ENCODE measurements at regions of chr10 and their contacts with region 1.

Region 1: DNA sequence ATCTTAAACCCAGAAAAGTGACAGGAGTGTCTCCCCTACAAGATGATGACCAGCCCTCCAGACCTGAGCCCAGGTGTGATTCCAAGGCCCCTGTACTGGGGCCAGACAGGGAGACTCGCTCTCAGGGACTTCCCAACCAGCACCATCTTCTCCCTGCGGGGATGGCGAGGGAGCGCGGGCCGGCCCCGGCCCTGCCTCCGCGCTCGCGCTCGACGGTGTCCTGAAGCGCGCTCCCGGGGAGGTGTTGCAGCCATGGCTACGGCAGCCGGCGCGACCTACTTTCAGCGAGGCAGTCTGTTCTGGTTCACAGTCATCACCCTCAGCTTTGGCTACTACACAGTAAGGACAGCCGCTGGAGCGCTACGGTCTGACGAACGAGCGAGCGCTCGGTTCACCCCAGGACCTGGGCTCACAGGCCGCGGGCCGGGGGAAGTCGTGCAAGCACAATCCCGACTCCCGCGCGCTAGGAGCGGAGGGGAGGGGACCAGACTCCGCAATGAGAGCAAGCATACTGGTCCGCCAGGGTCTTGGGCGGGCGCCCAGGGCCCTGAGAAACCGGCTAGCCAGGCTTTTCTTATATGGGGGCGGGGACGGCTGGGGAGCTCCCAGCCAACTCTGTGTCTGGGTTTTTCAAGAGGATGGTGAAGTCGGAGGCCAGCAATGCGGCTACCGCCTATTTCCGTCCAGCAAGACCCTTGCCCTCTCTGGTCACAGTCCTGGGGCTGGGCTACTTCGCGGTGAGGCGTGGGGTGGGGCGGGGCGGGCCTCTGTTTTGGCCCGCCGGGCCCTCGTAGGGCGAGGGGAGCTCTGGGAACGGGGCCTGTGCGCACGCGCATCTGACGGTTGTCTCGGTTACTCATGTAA is at the start of gene TMEM254:
- DNase-seq: peak; percentile 95
- ATAC-seq: peak; percentile 74
- H3K4me3 Mint-ChIP-seq: peak within 1 kb of the TSS; percentile 93
- H3K27ac Mint-ChIP-seq: peak within 1 kb of the TSS; percentile 96
- H3K4me1 Mint-ChIP-seq: peaks cover 32% of the 10 kb centered on the region
- H3K27me3 Mint-ChIP-seq: no peaks in the 10 kb centered on the region
- total RNA-seq, gene TMEM254: 11.3 to 15.2 TPM

Region 2: DNA sequence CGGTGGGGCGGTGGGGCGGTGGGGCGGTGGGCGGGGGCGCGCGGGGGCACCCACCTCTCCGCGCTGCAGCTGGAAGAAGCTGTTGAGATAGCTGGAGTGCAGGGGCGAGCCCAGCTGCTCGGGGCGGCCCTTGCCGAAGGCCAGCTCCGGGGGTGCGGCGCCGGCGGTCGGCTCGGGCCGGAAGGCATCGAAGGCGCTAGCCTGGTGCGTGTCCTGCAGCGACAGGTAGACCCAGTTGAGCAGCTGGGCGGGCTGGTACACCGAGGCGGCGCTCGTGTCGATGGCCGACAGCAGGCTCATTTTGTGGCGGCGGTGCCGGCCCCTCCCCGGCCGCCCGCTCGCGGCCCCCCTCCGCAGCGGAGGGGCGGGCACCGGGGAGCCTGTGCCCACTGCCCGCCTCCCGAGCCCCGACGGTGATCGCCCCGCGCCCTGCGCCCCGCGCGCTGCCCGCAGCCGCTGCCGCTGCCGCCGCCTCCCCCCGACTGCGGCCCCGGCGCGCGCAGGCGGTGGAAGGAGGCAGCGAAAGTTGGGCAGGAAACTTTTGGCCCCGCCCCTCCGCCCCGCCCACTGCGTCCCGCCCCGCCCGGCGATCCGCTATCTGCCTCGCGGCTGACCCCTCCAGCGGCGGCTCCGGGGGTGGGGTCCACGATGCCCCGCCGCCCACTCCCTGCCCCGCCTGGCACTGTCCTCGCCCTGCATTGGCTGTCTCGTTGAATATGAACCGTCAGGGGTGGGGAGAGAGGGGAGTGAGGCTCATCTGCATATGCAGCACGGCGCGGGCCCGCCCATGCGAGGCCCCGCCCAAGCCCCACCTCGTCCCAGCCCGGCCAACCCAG is 633.3 kb before region 1 on chr10 and contains the start of gene ZCCHC24:
- CTCF ChIA-PET with region 1: no interaction called
- POLR2A ChIA-PET with region 1: no interaction called
- intact Hi-C with region 1: loop called in 1 of 2 experiments (anchors 1 kb)
- DNase-seq: peak; percentile 93
- ATAC-seq: peak; percentile 97
- H3K4me3 Mint-ChIP-seq: peak within 1 kb of the TSS; percentile 65
- H3K27ac Mint-ChIP-seq: no peak within 1 kb of the TSS
- H3K4me1 Mint-ChIP-seq: peaks cover 16% of the 10 kb centered on the region
- H3K27me3 Mint-ChIP-seq: peaks cover 7% of the 10 kb centered on the region
- total RNA-seq, gene ZCCHC24: 0.53 to 0.75 TPM

Region 3: GRCh38 chr10:80187465-80188409 is 109.1 kb after region 1 on chr10:
- CTCF ChIA-PET with region 1: interaction called, 3 read pairs
- POLR2A ChIA-PET with region 1: no interaction called
- intact Hi-C with region 1: loop called in 1 of 2 experiments (anchors 5 kb)
- DNase-seq: peak; percentile 88
- ATAC-seq: peak; percentile 80
- H3K4me3 Mint-ChIP-seq: peak overlapping the region; percentile 60
- H3K27ac Mint-ChIP-seq: peak overlapping the region; percentile 91
- H3K4me1 Mint-ChIP-seq: peaks cover 85% of the 10 kb centered on the region
- H3K27me3 Mint-ChIP-seq: no peaks in the 10 kb centered on the region

Region 4: GRCh38 chr10:80530251-80530650 is 451.6 kb after region 1 on chr10:
- CTCF ChIA-PET with region 1: no interaction called
- POLR2A ChIA-PET with region 1: no interaction called
- intact Hi-C with region 1: loop called in 1 of 2 experiments (anchors 10 kb)
- DNase-seq: peak; percentile 81
- ATAC-seq: peak; percentile 92
- H3K4me3 Mint-ChIP-seq: no peak overlapping the region
- H3K27ac Mint-ChIP-seq: peak overlapping the region; percentile 61
- H3K4me1 Mint-ChIP-seq: peaks cover 66% of the 10 kb centered on the region
- H3K27me3 Mint-ChIP-seq: no peaks in the 10 kb centered on the region